ENCODE measurements at regions of chr15 and their contacts with region 1.

Region 1: GRCh38 chr15:40382580-40383456 is at the start of gene KNSTRN:
- DNase-seq: peak; percentile 96
- ATAC-seq: peak; percentile 99
- H3K4me3 Mint-ChIP-seq: peak within 1 kb of the TSS; percentile 92
- H3K27ac Mint-ChIP-seq: peak within 1 kb of the TSS; percentile 84
- H3K4me1 Mint-ChIP-seq: peaks cover 25% of the 10 kb centered on the region
- H3K27me3 Mint-ChIP-seq: peaks cover 9% of the 10 kb centered on the region
- total RNA-seq, gene KNSTRN: 71.1 to 74.1 TPM

Region 2: DNA sequence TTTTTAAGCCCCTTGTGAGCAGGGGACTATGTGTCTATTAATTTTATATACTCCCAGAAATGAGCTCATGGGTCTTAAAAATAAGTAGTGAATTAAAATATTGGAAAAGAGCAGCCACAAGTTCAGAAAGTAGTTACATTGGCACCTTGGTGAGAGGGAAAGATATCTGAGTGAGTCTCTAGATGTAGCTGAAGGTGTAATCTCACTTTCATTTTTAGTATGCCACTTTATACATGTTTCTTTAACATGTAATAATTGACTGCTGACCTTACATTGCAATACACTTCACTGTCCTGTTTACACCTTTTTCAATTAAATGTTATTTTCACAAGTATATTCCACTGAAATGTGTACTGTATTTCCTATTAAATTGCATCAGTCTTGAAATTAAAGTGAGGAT is 156.1 kb before region 1 on chr15:
- CTCF ChIA-PET with region 1: no interaction called
- POLR2A ChIA-PET with region 1: no interaction called
- DNase-seq: no peak
- ATAC-seq: no peak
- H3K4me3 Mint-ChIP-seq: no peak overlapping the region
- H3K27ac Mint-ChIP-seq: no peak overlapping the region
- H3K4me1 Mint-ChIP-seq: peaks cover 16% of the 10 kb centered on the region
- H3K27me3 Mint-ChIP-seq: no peaks in the 10 kb centered on the region

Region 3: DNA sequence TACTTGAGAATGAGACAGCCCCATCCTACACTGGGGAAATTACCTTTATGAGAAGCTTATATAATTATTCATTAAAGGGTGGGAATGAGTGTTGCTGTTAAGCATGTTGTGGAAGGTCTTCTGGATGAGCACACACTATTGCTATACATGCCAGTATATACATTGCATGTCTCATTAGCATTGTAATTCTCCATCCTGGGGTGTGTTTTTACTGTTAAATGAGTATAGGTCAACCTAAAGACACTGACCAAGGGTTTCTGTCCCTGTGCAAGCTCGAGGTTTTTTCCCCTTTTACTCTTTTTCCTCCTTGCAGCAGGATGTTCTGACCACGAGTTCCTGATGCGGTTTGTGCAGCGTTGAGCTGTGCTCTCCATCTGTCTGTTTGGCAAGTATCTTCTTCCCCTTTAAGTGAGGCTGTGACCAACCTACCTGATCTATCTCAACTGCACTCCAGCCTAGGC is 15.6 kb after region 1 on chr15:
- CTCF ChIA-PET with region 1: interaction called, 5 read pairs
- POLR2A ChIA-PET with region 1: interaction called, 14 read pairs
- DNase-seq: peak; percentile 46
- ATAC-seq: peak; percentile 86
- H3K4me3 Mint-ChIP-seq: peak overlapping the region; percentile 61
- H3K27ac Mint-ChIP-seq: peak overlapping the region; percentile 84
- H3K4me1 Mint-ChIP-seq: peaks cover 31% of the 10 kb centered on the region
- H3K27me3 Mint-ChIP-seq: no peaks in the 10 kb centered on the region